ENCODE measurements at regions of chr4 and their contacts with region 1.

Region 1: GRCh38 chr4:174928174-174928573 is 10.0 kb downstream of the ADAM29 start:
- DNase-seq: no peak
- ATAC-seq: peak; percentile 71
- H3K4me3 Mint-ChIP-seq: peak overlapping the region; percentile 16
- H3K27ac Mint-ChIP-seq: peak overlapping the region; percentile 79
- H3K4me1 Mint-ChIP-seq: peaks cover 31% of the 10 kb centered on the region
- H3K27me3 Mint-ChIP-seq: no peaks in the 10 kb centered on the region
- CTCF ChIP-seq: no peak

Region 2: GRCh38 chr4:174764105-174764729 is 164.0 kb before region 1 on chr4:
- CTCF ChIA-PET with region 1: no interaction called
- POLR2A ChIA-PET with region 1: no interaction called
- intact Hi-C with region 1: loop called (anchors 5 kb)
- DNase-seq: no peak
- ATAC-seq: peak; percentile 25
- H3K4me3 Mint-ChIP-seq: no peak overlapping the region
- H3K27ac Mint-ChIP-seq: no peak overlapping the region
- H3K4me1 Mint-ChIP-seq: peaks cover 9% of the 10 kb centered on the region
- H3K27me3 Mint-ChIP-seq: no peaks in the 10 kb centered on the region
- CTCF ChIP-seq: no peak

Region 3: DNA sequence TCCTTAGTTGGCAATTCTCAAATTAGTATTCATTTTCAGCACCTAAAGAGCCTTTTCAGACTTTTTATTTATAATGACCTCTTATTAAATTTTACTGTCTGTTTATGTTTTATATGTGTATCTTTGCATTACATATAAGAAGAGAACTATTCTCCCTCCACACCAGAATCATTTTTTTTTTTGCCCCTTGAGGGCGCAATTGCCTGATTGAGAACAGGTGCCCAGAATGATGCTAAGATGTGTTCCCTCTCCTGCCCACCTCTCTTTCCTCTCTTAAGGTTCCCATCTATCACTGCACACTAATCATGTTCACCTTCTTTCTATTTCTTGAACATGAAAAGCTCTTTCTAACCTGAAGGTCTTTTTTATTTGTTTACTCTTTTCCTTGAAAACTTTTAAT is 54.2 kb before region 1 on chr4:
- CTCF ChIA-PET with region 1: no interaction called
- POLR2A ChIA-PET with region 1: no interaction called
- intact Hi-C with region 1: loop called (anchors 2 kb)
- DNase-seq: no peak
- ATAC-seq: no peak
- H3K4me3 Mint-ChIP-seq: no peak overlapping the region
- H3K27ac Mint-ChIP-seq: no peak overlapping the region
- H3K4me1 Mint-ChIP-seq: peaks cover 7% of the 10 kb centered on the region
- H3K27me3 Mint-ChIP-seq: no peaks in the 10 kb centered on the region
- CTCF ChIP-seq: no peak

Measured in activated B cell treated with CpG ODN at 0.5 μM for 24 hours (primary cell).